ENCODE measurements at regions of chr1 and their contacts with region 1.

Region 1: GRCh38 chr1:43293896-43294760 is 6.7 kb upstream of the TIE1 start:
- DNase-seq: no peak
- ATAC-seq: no peak
- H3K4me3 ChIP-seq: no peak overlapping the region
- H3K27ac ChIP-seq: peak overlapping the region in 3 of 4 donors; percentile 62 to 84 (median 71)
- H3K4me1 ChIP-seq: peaks cover 27% of the 10 kb centered on the region
- H3K27me3 ChIP-seq: no peaks in the 10 kb centered on the region
- CTCF ChIP-seq: no peak
- POLR2A ChIP-seq: no peak

Region 2: GRCh38 chr1:43358746-43359693 is 64.9 kb after region 1 on chr1 and contains the start of gene CDC20:
- intact Hi-C with region 1: loop called (anchors 10 kb)
- DNase-seq: peak; percentile 98 to 99 (median 99)
- ATAC-seq: peak; percentile 99
- H3K4me3 ChIP-seq: peak within 1 kb of the TSS; percentile 16 to 20
- H3K27ac ChIP-seq: peak within 1 kb of the TSS; percentile 79 to 93 (median 86)
- H3K4me1 ChIP-seq: peaks cover 13% of the 10 kb centered on the region
- H3K27me3 ChIP-seq: no peaks in the 10 kb centered on the region
- CTCF ChIP-seq: no peak
- POLR2A ChIP-seq: peak in 1 of 3 donors; percentile 3
- total RNA-seq, gene CDC20: 2.3 TPM in 1 of 2 donors, not detected in the other

Region 3: DNA sequence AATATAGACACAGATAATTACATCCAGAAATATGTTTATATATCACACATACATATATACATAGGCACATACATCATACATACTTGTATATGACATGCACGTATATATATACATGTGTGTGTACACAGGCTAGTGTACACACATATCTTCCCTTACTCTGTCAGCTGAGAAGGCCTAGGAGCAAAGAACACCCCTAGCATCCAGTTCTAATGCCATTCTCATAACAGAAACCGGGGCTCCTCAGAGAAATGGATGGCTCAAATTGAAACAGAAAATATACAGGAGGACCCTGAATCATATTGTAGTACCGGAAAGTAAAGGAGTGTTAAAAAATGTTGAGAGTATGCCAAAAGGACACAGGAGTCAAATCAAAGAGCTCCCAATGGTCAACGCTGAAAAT is 179.3 kb after region 1 on chr1:
- intact Hi-C with region 1: no loop called
- DNase-seq: no peak
- ATAC-seq: no peak
- H3K4me3 ChIP-seq: no peak overlapping the region
- H3K27ac ChIP-seq: peak overlapping the region in 1 of 4 donors; percentile 74
- H3K4me1 ChIP-seq: peaks cover 18% of the 10 kb centered on the region
- H3K27me3 ChIP-seq: no peaks in the 10 kb centered on the region
- CTCF ChIP-seq: no peak
- POLR2A ChIP-seq: no peak

Region 4: DNA sequence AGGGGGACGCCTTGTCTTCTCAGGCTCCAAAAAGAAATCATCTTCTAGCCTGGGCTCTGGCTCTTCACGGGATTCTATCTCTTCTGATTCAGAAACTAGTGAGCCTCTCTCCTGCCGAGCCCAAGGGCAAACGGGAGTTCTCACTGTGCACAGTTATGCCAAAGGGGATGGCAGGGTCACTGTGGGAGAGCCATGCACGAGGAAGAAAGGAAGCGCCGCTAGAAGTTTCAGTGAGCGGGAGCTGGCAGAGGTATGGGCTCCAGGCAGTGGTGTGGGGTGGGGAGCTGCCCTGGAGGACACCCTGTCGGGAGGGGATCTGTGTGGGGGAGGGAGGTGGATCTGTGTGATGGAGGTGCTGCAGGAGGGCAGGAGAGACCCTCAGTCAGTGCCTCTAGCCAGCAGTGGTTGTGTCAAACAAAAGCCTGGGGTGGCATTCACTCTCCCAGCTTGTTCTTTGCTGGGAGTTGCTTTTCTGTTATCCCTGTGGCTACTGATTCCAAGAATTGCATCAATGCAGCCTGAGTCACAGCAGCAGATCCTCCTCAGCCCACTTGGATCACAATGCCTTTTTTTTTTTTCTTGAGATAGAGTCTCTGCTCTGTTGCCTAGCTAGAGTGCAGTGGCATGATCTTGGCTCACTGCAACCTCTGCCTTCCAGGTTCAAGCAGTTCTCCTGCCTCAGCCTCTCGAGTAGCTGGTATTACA is 377.6 kb after region 1 on chr1:
- intact Hi-C with region 1: no loop called
- DNase-seq: no peak
- ATAC-seq: no peak
- H3K4me3 ChIP-seq: no peak overlapping the region
- H3K27ac ChIP-seq: no peak overlapping the region
- H3K4me1 ChIP-seq: no peaks in the 10 kb centered on the region
- H3K27me3 ChIP-seq: no peaks in the 10 kb centered on the region
- CTCF ChIP-seq: no peak
- POLR2A ChIP-seq: no peak